WTC11 (cell line): ENCODE measurements at regions of chr18 and their contacts with region 1.

Region 1: DNA sequence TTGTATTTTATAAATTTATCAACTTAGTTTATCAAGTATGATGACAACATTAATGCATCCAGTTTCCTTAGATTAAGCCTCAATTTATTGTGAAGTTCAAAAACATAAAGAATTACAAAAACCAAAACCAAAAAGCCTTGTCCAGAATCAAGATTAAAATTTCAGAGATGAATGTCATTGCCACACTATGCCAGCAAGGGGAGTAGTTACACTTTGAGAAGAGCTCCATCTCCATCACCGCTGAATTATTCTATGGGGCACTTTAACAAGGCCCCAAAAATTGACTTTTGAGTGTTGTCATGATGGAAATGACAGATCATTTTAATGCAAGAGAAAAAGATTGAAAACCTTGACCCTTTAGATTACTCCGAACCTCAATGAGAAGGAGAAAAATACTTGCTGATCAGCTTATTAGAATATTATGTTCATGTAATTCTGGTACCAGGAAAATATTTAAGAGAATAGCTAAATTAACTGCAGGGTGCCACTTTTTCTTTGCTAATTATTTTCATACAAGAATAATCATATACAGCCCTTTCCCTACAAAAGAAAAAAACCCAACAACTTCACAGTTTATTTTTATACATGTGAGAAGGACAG is 152.5 kb upstream of the AQP4 start:
- DNase-seq: no peak
- ATAC-seq: peak; percentile 62
- H3K4me3 Mint-ChIP-seq: no peak overlapping the region
- H3K27ac Mint-ChIP-seq: no peak overlapping the region
- H3K4me1 Mint-ChIP-seq: peaks cover 24% of the 10 kb centered on the region
- H3K27me3 Mint-ChIP-seq: no peaks in the 10 kb centered on the region
- CTCF ChIP-seq: 0 out of 2 replicates have a peak, but pooled peaks have one; percentile 22

Region 2: GRCh38 chr18:27005589-27005988 is 12.4 kb before region 1 on chr18:
- CTCF ChIA-PET with region 1: interaction called, 10 read pairs
- POLR2A ChIA-PET with region 1: no interaction called
- DNase-seq: no peak
- ATAC-seq: peak; percentile 81
- H3K4me3 Mint-ChIP-seq: no peak overlapping the region
- H3K27ac Mint-ChIP-seq: no peak overlapping the region
- H3K4me1 Mint-ChIP-seq: peaks cover 20% of the 10 kb centered on the region
- H3K27me3 Mint-ChIP-seq: no peaks in the 10 kb centered on the region
- CTCF ChIP-seq: 0 out of 2 replicates have a peak, but pooled peaks have one; percentile 14

Region 3: DNA sequence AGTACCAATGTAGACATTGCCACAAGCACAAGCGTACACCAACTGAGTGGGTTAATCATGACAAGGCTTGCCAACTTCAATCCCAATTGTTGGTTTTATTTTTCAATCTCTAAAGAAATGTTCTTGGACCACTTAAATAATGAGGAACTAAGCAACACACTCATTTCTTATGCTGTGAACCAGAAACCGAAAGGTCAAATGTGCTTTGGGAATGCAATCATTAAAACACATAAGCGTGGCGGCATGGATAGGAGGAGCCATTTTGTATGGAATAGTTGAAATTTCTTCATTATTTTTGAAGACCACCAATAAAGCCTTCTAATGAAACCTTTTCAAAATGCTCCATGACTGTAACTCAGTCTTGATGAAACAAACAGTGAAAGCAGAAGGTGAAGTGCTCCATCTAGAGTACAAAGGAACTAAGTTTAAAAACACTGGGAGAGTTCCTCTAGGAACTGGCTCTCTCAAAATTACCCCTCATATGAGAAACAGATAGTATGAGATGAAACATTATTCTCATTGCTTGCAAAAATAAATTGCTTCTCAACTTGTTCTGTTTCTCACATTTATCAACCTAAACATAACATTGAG is 280.3 kb after region 1 on chr18:
- CTCF ChIA-PET with region 1: interaction called, 12 read pairs
- POLR2A ChIA-PET with region 1: no interaction called
- DNase-seq: no peak
- ATAC-seq: peak; percentile 81
- H3K4me3 Mint-ChIP-seq: no peak overlapping the region
- H3K27ac Mint-ChIP-seq: 0 out of 2 replicates have a peak overlapping the region, but pooled peaks have one; percentile 23
- H3K4me1 Mint-ChIP-seq: peaks cover 19% of the 10 kb centered on the region
- H3K27me3 Mint-ChIP-seq: no peaks in the 10 kb centered on the region
- CTCF ChIP-seq: no peak